Activated CD4-positive, alpha-beta T cell treated with anti-CD3 and anti-CD28 coated beads for 36 hours (primary cell): ENCODE measurements at regions of chr13 and their contacts with region 1.

Region 1: GRCh38 chr13:40992678-40993518 is 26.2 kb downstream of the ELF1 start:
- DNase-seq: no peak
- ATAC-seq: no peak
- H3K4me3 Mint-ChIP-seq: no peak overlapping the region
- H3K27ac Mint-ChIP-seq: peak overlapping the region; percentile 84
- H3K4me1 Mint-ChIP-seq: peaks cover 86% of the 10 kb centered on the region
- H3K27me3 Mint-ChIP-seq: no peaks in the 10 kb centered on the region

Region 2: GRCh38 chr13:40895227-40896184 is 97.4 kb before region 1 on chr13:
- CTCF ChIA-PET with region 1: no interaction called
- POLR2A ChIA-PET with region 1: no interaction called
- intact Hi-C with region 1: no loop called
- DNase-seq: no peak
- ATAC-seq: no peak
- H3K4me3 Mint-ChIP-seq: no peak overlapping the region
- H3K27ac Mint-ChIP-seq: no peak overlapping the region
- H3K4me1 Mint-ChIP-seq: peaks cover 1% of the 10 kb centered on the region
- H3K27me3 Mint-ChIP-seq: no peaks in the 10 kb centered on the region

Region 3: GRCh38 chr13:41004875-41005693 is 12.2 kb after region 1 on chr13:
- CTCF ChIA-PET with region 1: interaction called, 4 read pairs
- POLR2A ChIA-PET with region 1: no interaction called
- intact Hi-C with region 1: loop called in 1 of 2 experiments (anchors 1 kb)
- DNase-seq: no peak
- ATAC-seq: peak; percentile 76
- H3K4me3 Mint-ChIP-seq: peak overlapping the region; percentile 29
- H3K27ac Mint-ChIP-seq: peak overlapping the region; percentile 93
- H3K4me1 Mint-ChIP-seq: peaks cover 63% of the 10 kb centered on the region
- H3K27me3 Mint-ChIP-seq: no peaks in the 10 kb centered on the region